ENCODE measurements at regions of chr20 and their contacts with region 1.

Region 1: GRCh38 chr20:3767427-3768341 is at the start of gene ADISSP:
- DNase-seq: peak; percentile 99
- ATAC-seq: peak; percentile 85 to 93
- H3K4me3 ChIP-seq: peak within 1 kb of the TSS; percentile 87
- H3K27ac ChIP-seq: peak within 1 kb of the TSS; percentile 86 to 92
- H3K4me1 ChIP-seq: peaks cover 20% of the 10 kb centered on the region
- CTCF ChIP-seq: no peak; the same call in 2 of the 3 replicates
- EP300 ChIP-seq: no peak
- POLR2A ChIP-seq: peak; percentile 94
- RAD21 ChIP-seq: no peak
- polyA plus RNA-seq, gene ADISSP: 43.9 and 44.0 TPM in 2 replicates

Region 2: GRCh38 chr20:3632311-3633004 is 135.2 kb before region 1 on chr20:
- CTCF ChIA-PET with region 1: no interaction called
- POLR2A ChIA-PET with region 1: no interaction called
- DNase-seq: no peak
- ATAC-seq: peak; percentile 23 to 64; a peak in 3 of 6 replicates
- H3K4me3 ChIP-seq: no peak overlapping the region
- H3K27ac ChIP-seq: no peak overlapping the region
- H3K4me1 ChIP-seq: no peaks in the 10 kb centered on the region
- CTCF ChIP-seq: peak; percentile 33; the same call in 1 of the 3 replicates
- EP300 ChIP-seq: no peak
- POLR2A ChIP-seq: no peak
- RAD21 ChIP-seq: peak; percentile 18 to 35; a peak in 2 of 5 replicates

Region 3: DNA sequence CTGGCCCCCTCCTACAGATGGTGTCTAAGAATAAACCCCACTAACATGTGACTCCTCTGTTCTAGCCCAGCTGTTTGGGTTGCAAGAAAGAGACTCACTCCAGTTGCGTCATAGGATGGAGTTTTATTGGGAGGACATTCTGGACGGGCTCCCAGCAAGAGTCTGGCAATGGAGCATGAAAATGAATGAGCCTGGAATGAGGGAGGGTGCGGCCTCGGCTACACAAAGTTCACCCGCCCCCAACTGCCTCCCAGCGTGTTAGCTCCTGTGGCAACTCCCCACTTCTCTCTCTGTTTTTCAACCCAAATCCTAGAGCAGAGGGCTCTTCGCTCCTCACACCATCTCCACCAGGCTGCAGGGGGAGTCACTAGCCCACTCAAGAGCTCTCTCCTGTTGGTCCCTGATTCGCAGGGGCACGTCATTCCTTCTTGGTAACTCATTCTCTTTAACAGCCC is 80.8 kb before region 1 on chr20:
- CTCF ChIA-PET with region 1: interaction called, 2,233 read pairs
- POLR2A ChIA-PET with region 1: interaction called, 3 read pairs
- DNase-seq: no peak
- ATAC-seq: peak in 1 of 2 experiments; percentile 32; a peak in 3 of 6 replicates
- H3K4me3 ChIP-seq: no peak overlapping the region
- H3K27ac ChIP-seq: 0 out of 6 replicates have a peak overlapping the region, but pooled peaks of 1 of the 2 experiments have one; percentile 3
- H3K4me1 ChIP-seq: peaks cover 8% of the 10 kb centered on the region; the same call in 2 of the 3 replicates
- CTCF ChIP-seq: no peak
- EP300 ChIP-seq: no peak
- POLR2A ChIP-seq: no peak
- RAD21 ChIP-seq: no peak

Region 4: DNA sequence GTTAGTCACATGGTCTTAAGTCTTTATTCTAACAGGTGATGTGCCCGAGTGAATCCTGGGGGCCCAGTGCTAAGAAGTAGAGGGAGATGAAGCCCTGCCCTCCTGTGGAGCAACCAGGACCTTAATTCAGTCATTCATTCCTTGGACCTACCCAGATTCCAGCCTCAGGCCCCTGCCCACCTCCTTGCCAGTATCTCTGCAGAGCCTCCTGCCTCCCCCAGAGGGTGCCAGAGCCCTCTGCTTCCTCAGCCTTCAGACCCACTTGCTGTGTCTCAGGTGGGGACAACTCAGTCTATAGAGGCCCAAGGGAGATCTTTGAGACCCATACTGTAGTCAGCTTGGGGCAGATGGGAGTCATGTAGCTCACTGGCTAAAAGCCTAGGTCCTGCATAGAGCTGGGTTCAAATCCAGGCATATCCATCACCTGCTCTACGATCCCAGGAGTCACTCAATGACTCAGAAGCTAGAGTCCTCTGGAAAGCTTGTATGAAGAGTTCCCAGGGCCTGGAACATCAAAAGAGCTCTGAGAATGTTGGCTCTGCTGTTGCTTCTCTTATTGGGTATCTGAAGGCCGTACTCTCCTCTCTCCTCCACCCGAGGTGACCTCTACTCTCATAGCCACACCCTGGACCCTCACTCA is 51.4 kb before region 1 on chr20:
- CTCF ChIA-PET with region 1: interaction called, 23 read pairs
- POLR2A ChIA-PET with region 1: no interaction called
- DNase-seq: peak; percentile 73 to 74
- ATAC-seq: peak; percentile 89 to 97
- H3K4me3 ChIP-seq: no peak overlapping the region
- H3K27ac ChIP-seq: no peak overlapping the region
- H3K4me1 ChIP-seq: no peaks in the 10 kb centered on the region
- CTCF ChIP-seq: peak; percentile 68
- EP300 ChIP-seq: no peak
- POLR2A ChIP-seq: no peak
- RAD21 ChIP-seq: peak; percentile 77 to 92

Region 5: GRCh38 chr20:3744806-3745685 is 22.6 kb before region 1 on chr20:
- CTCF ChIA-PET with region 1: interaction called, 1,634 read pairs
- POLR2A ChIA-PET with region 1: interaction called, 21 read pairs
- DNase-seq: peak; percentile 94 to 95
- ATAC-seq: peak; percentile 62 to 77
- H3K4me3 ChIP-seq: peak overlapping the region; percentile 44
- H3K27ac ChIP-seq: peak overlapping the region; percentile 64 to 75
- H3K4me1 ChIP-seq: peaks cover 4% of the 10 kb centered on the region; the same call in 1 of the 3 replicates
- CTCF ChIP-seq: no peak
- EP300 ChIP-seq: no peak
- POLR2A ChIP-seq: no peak
- RAD21 ChIP-seq: no peak

Region 6: DNA sequence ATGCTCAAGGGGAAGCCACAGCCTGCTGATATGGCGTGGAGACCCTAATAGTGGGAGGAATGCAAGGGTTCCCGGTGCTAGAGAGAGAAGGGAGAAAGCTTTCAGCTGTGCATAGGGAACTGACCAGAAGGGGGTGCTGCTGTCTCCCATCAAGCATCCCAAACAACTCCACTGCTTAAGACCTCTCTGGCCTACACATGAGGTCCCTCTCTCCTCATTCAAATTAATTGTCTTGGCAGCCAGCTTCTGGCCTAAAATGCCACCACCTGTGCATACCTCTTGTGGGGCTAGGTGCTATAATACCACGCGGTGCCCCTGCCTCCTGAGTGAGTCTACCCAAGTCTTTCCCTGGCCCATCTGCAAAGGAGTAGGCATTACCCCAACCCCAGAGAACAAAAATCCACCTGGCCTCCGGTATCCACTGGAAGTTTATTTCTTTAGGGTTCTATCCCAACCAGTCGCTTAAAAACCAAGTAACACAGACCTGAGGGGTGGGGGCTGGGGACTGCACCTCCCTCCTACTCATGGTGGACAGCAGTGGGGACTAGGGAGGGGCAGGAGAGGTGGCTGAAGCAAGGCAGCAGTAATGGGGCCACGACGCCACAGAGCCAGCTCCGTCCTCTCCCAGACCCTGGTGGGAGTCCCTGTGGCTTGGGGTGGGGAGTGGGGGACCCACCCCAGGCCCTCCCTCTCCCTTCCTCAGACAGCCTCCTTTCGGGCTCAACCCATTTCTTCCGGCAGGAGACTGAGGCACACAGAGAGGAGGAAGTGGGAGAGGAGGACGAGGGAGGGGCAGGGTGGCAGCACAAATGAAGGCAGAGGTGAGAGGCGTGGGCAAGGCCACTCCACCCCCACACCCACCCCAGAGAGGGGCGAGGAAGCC is 14.3 kb before region 1 on chr20:
- CTCF ChIA-PET with region 1: interaction called, 1,634 read pairs
- POLR2A ChIA-PET with region 1: interaction called, 21 read pairs
- DNase-seq: peak; percentile 85 to 89
- ATAC-seq: peak; percentile 28 to 62; a peak in 3 of 6 replicates
- H3K4me3 ChIP-seq: no peak overlapping the region
- H3K27ac ChIP-seq: no peak overlapping the region
- H3K4me1 ChIP-seq: peaks cover 7% of the 10 kb centered on the region; the same call in 2 of the 3 replicates
- CTCF ChIP-seq: peak; percentile 81
- EP300 ChIP-seq: no peak
- POLR2A ChIP-seq: no peak
- RAD21 ChIP-seq: peak; percentile 57 to 71